ENCODE measurements at regions of chrX and their contacts with region 1.

Region 1: DNA sequence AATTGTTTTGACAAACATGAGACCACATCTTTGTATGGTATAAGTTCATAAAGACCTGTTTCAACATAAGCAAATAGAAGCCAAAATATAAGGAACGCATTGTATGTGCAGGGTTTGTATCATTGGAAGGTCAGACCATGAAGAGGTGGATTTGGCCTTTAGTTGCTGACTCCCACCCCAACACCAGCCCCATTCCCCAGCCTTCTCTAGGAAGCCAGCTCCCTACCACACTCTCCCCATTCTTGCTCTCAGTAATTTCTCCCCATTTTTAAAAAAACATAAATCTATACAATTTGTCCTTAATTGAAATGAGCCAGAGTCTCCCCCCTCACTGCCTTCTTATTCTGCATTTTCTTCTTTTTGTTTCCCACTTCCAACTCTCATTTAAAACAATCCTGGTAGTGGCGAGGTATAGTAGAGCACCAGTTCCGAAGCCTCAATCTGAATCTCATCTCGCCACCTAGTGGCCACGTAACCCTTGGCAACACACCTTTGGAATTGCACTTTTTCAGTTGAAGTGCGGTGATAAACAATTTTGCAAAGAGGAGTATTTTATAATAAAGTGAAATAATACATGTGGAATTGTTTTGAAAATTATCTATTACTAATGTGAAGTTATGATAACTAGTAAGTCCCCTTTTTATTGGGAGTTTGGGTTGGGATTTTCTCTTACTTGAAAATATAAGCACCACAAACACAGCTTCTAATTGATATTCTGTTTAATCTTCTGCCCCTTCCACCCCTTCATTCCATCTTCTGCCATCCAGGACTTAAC is 126.6 kb downstream of the ASB9 start:
- DNase-seq: peak; percentile 67
- H3K4me3 Mint-ChIP-seq: no peak overlapping the region
- H3K27ac Mint-ChIP-seq: no peak overlapping the region
- H3K4me1 Mint-ChIP-seq: no peaks in the 10 kb centered on the region
- H3K27me3 Mint-ChIP-seq: peaks cover 70% of the 10 kb centered on the region
- CTCF ChIP-seq: peak; percentile 74

Region 2: GRCh38 chrX:14039344-14039743 is 1103.9 kb before region 1 on chrX:
- CTCF ChIA-PET with region 1: interaction called, 17 read pairs
- POLR2A ChIA-PET with region 1: no interaction called
- intact Hi-C with region 1: loop called (anchors 1 kb)
- DNase-seq: peak; percentile 75
- H3K4me3 Mint-ChIP-seq: no peak overlapping the region
- H3K27ac Mint-ChIP-seq: no peak overlapping the region
- H3K4me1 Mint-ChIP-seq: no peaks in the 10 kb centered on the region
- H3K27me3 Mint-ChIP-seq: peaks cover 81% of the 10 kb centered on the region
- CTCF ChIP-seq: peak; percentile 81

Region 3: DNA sequence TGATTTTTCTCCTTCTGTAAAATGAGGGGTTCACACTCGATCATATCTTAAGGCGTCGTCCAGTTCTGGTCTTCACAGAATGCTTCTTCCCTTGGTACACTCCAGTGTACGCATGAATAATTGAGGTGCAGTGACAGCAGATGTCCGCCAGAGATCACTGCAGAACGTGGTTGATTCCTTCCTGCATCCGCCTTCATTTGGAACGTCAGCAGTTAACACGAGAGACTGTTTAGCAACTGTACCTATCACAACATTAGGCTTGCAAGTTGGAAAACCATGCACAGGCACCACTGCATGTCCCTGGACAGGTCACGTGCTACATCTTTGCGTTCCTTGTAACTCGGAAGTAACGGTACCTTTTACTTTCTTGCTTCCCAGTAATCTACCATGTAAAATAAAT is 1047.5 kb before region 1 on chrX:
- CTCF ChIA-PET with region 1: interaction called, 35 read pairs
- POLR2A ChIA-PET with region 1: no interaction called
- intact Hi-C with region 1: loop called (anchors 1 kb)
- DNase-seq: peak; percentile 82
- H3K4me3 Mint-ChIP-seq: no peak overlapping the region
- H3K27ac Mint-ChIP-seq: no peak overlapping the region
- H3K4me1 Mint-ChIP-seq: no peaks in the 10 kb centered on the region
- H3K27me3 Mint-ChIP-seq: peaks cover 80% of the 10 kb centered on the region
- CTCF ChIP-seq: peak; percentile 79

Region 4: GRCh38 chrX:14712102-14712501 is 431.1 kb before region 1 on chrX:
- CTCF ChIA-PET with region 1: no interaction called
- POLR2A ChIA-PET with region 1: no interaction called
- intact Hi-C with region 1: loop called (anchors 10 kb)
- DNase-seq: no peak
- H3K4me3 Mint-ChIP-seq: no peak overlapping the region
- H3K27ac Mint-ChIP-seq: no peak overlapping the region
- H3K4me1 Mint-ChIP-seq: no peaks in the 10 kb centered on the region
- H3K27me3 Mint-ChIP-seq: peaks cover 23% of the 10 kb centered on the region
- CTCF ChIP-seq: no peak

Region 5: DNA sequence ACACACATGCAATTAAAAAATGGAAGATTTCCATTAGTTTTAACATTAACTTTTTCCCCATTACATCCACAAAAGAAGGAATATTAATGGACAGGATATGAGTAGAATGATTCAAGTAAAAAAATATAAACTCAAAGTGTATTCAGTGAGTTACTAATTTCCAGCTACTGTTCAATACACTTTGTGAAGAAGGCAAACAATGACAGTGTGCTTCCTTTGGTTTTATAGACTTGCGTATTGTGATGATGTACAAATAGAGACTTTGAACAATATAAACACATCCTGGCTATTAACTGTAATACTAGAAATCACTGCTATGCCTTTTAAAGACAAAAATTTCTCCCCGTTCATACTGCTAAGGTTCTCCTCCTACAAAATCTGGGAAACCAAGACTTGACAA is 44.7 kb before region 1 on chrX:
- CTCF ChIA-PET with region 1: no interaction called
- POLR2A ChIA-PET with region 1: no interaction called
- intact Hi-C with region 1: no loop called
- DNase-seq: no peak
- H3K4me3 Mint-ChIP-seq: no peak overlapping the region
- H3K27ac Mint-ChIP-seq: no peak overlapping the region
- H3K4me1 Mint-ChIP-seq: no peaks in the 10 kb centered on the region
- H3K27me3 Mint-ChIP-seq: peaks cover 35% of the 10 kb centered on the region
- CTCF ChIP-seq: no peak

Region 6: DNA sequence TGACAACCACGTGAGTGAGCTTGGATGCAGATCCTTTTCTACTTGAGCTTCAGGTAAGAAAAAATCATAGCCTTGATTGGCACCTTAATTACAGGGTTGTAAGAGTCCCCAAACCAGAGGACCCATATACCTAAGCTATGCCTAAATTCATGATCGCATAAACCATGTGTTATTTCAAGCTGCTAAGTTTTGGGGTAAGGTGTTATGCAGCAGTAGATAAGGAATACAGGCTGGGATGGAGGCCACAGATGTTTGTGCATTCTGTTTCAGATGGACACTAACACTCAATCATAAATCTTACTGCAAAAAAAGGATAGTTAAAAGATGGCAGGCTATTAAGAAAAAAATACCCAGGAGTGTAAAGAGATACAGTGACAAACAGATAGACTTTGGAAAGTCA is 14.4 kb after region 1 on chrX:
- CTCF ChIA-PET with region 1: interaction called, 10 read pairs
- POLR2A ChIA-PET with region 1: no interaction called
- intact Hi-C with region 1: no loop called
- DNase-seq: no peak
- H3K4me3 Mint-ChIP-seq: no peak overlapping the region
- H3K27ac Mint-ChIP-seq: no peak overlapping the region
- H3K4me1 Mint-ChIP-seq: no peaks in the 10 kb centered on the region
- H3K27me3 Mint-ChIP-seq: peaks cover 87% of the 10 kb centered on the region
- CTCF ChIP-seq: no peak

Region 7: GRCh38 chrX:15336023-15336413 is 192.8 kb after region 1 on chrX:
- CTCF ChIA-PET with region 1: no interaction called
- POLR2A ChIA-PET with region 1: no interaction called
- intact Hi-C with region 1: no loop called
- DNase-seq: peak; percentile 6
- H3K4me3 Mint-ChIP-seq: peak overlapping the region; percentile 80
- H3K27ac Mint-ChIP-seq: peak overlapping the region; percentile 88
- H3K4me1 Mint-ChIP-seq: peaks cover 5% of the 10 kb centered on the region
- H3K27me3 Mint-ChIP-seq: peaks cover 51% of the 10 kb centered on the region
- CTCF ChIP-seq: no peak

Region 8: GRCh38 chrX:15882704-15883539 is 739.7 kb after region 1 on chrX:
- CTCF ChIA-PET with region 1: no interaction called
- POLR2A ChIA-PET with region 1: no interaction called
- intact Hi-C with region 1: no loop called
- DNase-seq: peak; percentile 22
- H3K4me3 Mint-ChIP-seq: no peak overlapping the region
- H3K27ac Mint-ChIP-seq: no peak overlapping the region
- H3K4me1 Mint-ChIP-seq: no peaks in the 10 kb centered on the region
- H3K27me3 Mint-ChIP-seq: peaks cover 61% of the 10 kb centered on the region
- CTCF ChIP-seq: no peak